CD4-positive, alpha-beta memory T cell (primary cell): ENCODE measurements at regions of chr12 and their contacts with region 1.

Region 1: GRCh38 chr12:25436203-25437030 is 116.7 kb downstream of the LMNTD1 start:
- DNase-seq: peak in 4 of 5 donors; percentile 38 to 52 (median 48)
- H3K4me3 ChIP-seq: no peak overlapping the region
- H3K4me3 Mint-ChIP-seq: peak overlapping the region in 6 of 8 donors; percentile 22 to 39 (median 28)
- H3K27ac ChIP-seq: no peak overlapping the region
- H3K27ac Mint-ChIP-seq: no peak overlapping the region
- H3K4me1 ChIP-seq: no peaks in the 10 kb centered on the region
- H3K4me1 Mint-ChIP-seq: peaks cover 3 to 8% (median 5%) of the 10 kb centered on the region in 4 donors
- H3K27me3 ChIP-seq: no peaks in the 10 kb centered on the region
- H3K27me3 Mint-ChIP-seq: peaks cover 0 to 4% of the 10 kb centered on the region in 2 donors

Region 2: DNA sequence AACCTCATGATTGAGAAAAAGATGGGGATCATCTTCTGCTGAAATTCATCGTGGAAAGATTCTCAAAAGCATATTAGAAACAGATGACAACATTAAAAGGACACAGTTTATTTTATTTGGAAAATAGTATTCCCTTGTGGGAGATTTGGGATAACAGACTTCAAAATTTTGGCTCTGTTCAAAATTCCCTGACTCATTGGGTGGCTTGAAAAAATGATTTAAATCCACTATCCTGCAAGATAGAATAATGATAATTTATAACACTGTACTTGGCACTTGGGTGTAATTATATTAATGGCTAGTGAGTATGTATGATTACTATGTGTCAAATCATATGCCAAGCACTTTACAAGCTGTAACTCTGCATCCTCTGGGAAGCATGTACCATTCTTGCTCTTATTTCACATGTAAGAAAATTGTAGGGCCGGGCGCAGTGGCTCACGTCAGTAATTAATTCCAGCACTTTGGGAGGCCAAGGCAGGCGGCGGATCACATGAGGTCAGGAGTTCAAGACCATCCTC is 12.1 kb before region 1 on chr12:
- CTCF ChIA-PET with region 1: interaction called, 10 read pairs
- POLR2A ChIA-PET with region 1: no interaction called
- intact Hi-C with region 1: no loop called
- DNase-seq: no peak
- H3K4me3 ChIP-seq: no peak overlapping the region
- H3K4me3 Mint-ChIP-seq: no peak overlapping the region
- H3K27ac ChIP-seq: no peak overlapping the region
- H3K27ac Mint-ChIP-seq: no peak overlapping the region
- H3K4me1 ChIP-seq: no peaks in the 10 kb centered on the region
- H3K4me1 Mint-ChIP-seq: no peaks in the 10 kb centered on the region
- H3K27me3 ChIP-seq: no peaks in the 10 kb centered on the region
- H3K27me3 Mint-ChIP-seq: peaks cover 0 to 5% of the 10 kb centered on the region in 2 donors